ENCODE measurements at regions of chr6 and their contacts with region 1.

Region 1: GRCh38 chr6:21593412-21593926 is at the start of gene SOX4:
- DNase-seq: peak; percentile 91
- ATAC-seq: peak; percentile 84
- H3K4me3 ChIP-seq: peak within 1 kb of the TSS; percentile 66 to 82 (median 71)
- H3K4me3 Mint-ChIP-seq: no peak within 1 kb of the TSS
- H3K27ac ChIP-seq: peak within 1 kb of the TSS; percentile 50 to 62
- H3K27ac Mint-ChIP-seq: peak within 1 kb of the TSS; percentile 96
- H3K4me1 ChIP-seq: peaks cover 23 to 31% of the 10 kb centered on the region in 2 donors
- H3K4me1 Mint-ChIP-seq: peaks cover 23% of the 10 kb centered on the region
- H3K27me3 ChIP-seq: peaks cover 0 to 8% (median 0%) of the 10 kb centered on the region in 4 experiments
- H3K27me3 Mint-ChIP-seq: peaks cover 10% of the 10 kb centered on the region
- CTCF ChIP-seq: no peak
- total RNA-seq, gene SOX4: 5.0 and 5.4 TPM in 2 replicates

Region 2: DNA sequence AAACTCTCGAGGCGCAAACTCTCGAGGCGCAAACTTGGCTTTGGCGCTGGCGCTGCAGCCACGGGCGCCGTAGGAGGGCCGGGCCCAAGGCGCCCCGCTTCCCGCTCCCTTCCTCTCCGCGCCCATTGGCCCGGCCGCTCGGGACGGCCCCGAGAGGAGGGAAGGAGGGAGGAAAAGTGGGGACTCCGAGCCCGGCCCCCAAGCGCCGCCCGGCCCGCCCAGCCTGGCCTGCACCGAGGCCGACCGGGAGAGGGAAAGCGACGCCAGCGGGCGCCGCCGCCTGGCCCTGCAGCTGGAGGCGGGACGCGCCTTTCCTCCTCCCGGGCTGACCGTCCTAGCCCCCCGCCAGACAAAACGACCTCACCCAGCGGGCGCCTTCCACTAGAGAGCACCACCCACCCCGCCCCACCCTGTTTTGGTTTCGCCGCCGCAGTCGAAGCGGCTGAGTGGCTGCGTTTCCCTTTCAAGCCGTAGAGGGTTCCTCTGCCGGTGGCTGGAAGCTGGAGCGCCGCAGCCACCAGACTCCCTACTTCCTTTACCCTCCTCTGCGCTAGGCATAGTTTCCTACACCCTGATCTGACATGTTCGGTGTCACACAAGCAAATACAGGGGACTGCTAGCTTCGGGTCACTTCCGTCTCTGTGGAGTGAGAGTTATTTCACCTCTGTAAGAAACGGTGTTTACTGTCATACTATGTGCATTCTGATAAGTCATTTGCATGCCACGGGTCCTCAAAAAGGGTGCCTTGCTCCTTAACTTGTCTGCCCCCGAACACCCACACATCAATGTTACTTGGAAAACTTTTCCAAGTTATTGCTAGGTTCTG is 1380.9 kb before region 1 on chr6 and contains the start of gene MBOAT1:
- CTCF ChIA-PET with region 1: no interaction called
- POLR2A ChIA-PET with region 1: interaction called, 5 read pairs
- intact Hi-C with region 1: loop called (anchors 2 kb)
- DNase-seq: peak; percentile 80
- ATAC-seq: peak; percentile 73
- H3K4me3 ChIP-seq: peak within 1 kb of the TSS; percentile 64 to 72 (median 68)
- H3K4me3 Mint-ChIP-seq: peak within 1 kb of the TSS; percentile 100
- H3K27ac ChIP-seq: peak within 1 kb of the TSS; percentile 40 to 58
- H3K27ac Mint-ChIP-seq: peak within 1 kb of the TSS; percentile 99
- H3K4me1 ChIP-seq: peaks cover 19 to 21% of the 10 kb centered on the region in 2 donors
- H3K4me1 Mint-ChIP-seq: peaks cover 27% of the 10 kb centered on the region
- H3K27me3 ChIP-seq: peaks cover 0 to 10% (median 1%) of the 10 kb centered on the region in 4 experiments
- H3K27me3 Mint-ChIP-seq: no peaks in the 10 kb centered on the region
- CTCF ChIP-seq: no peak
- total RNA-seq, gene MBOAT1: 7.3 and 8.1 TPM in 2 replicates

Region 3: DNA sequence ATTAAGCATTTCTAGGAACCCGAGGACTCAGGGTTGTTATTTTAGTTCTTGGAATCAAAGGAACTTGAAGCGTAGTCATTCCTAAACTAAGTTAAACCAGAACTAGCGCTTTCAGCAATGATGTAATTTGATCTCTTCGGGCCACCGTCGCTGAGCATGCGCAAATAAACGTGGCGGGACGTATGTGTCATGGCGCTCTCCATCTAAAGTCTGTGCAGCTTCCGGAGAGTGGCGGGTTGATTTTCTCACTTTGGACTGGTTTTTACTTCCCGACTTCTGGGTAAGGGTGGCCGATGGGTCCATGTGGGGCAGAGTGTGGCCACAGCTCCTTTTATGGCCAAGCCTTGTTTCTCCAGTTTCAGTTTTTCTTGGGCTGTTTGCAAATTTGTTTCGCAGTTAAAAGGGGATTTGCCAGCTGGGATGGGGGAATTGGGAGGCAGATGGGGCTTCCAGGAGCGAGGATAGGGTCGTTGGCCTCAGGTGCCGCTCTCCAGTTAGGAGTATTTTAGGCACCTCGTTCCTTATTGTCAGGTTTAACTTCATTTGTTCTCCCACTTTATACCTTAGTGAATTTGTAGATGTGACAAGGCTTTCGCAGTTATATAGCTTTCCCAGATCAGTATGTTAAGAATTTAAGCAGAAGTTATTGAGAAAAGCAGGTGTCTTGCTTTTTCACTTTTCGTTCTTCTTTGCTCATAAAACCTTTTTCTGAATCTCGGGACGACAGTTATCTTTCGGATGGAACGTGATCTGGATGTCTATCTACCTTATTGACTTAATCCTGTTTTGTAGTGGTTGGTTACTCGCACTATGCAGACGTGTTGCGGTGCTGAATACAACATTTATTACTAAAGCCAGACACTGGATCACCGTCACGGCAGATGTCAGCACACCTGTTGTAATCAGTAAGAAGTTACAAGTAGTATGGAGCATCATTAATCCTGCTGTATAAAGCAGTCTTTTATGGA is 1058.9 kb before region 1 on chr6 and contains the start of gene CDKAL1:
- CTCF ChIA-PET with region 1: interaction called, 3 read pairs
- POLR2A ChIA-PET with region 1: no interaction called
- intact Hi-C with region 1: loop called (anchors 1 kb)
- DNase-seq: peak; percentile 92
- ATAC-seq: peak; percentile 93
- H3K4me3 ChIP-seq: peak within 1 kb of the TSS; percentile 86 to 92 (median 89)
- H3K4me3 Mint-ChIP-seq: peak within 1 kb of the TSS; percentile 96
- H3K27ac ChIP-seq: peak within 1 kb of the TSS; percentile 88 to 94
- H3K27ac Mint-ChIP-seq: peak within 1 kb of the TSS; percentile 97
- H3K4me1 ChIP-seq: peaks cover 14 to 16% of the 10 kb centered on the region in 2 donors
- H3K4me1 Mint-ChIP-seq: peaks cover 37% of the 10 kb centered on the region
- H3K27me3 ChIP-seq: no peaks in the 10 kb centered on the region
- H3K27me3 Mint-ChIP-seq: no peaks in the 10 kb centered on the region
- CTCF ChIP-seq: no peak
- total RNA-seq, gene CDKAL1: 33.3 and 35.5 TPM in 2 replicates

Region 4: GRCh38 chr6:20789162-20789561 is 804.3 kb before region 1 on chr6:
- CTCF ChIA-PET with region 1: interaction called, 8 read pairs
- POLR2A ChIA-PET with region 1: no interaction called
- intact Hi-C with region 1: loop called (anchors 5 kb)
- DNase-seq: no peak
- ATAC-seq: no peak
- H3K4me3 ChIP-seq: no peak overlapping the region
- H3K4me3 Mint-ChIP-seq: no peak overlapping the region
- H3K27ac ChIP-seq: no peak overlapping the region
- H3K27ac Mint-ChIP-seq: no peak overlapping the region
- H3K4me1 ChIP-seq: no peaks in the 10 kb centered on the region
- H3K4me1 Mint-ChIP-seq: no peaks in the 10 kb centered on the region
- H3K27me3 ChIP-seq: no peaks in the 10 kb centered on the region
- H3K27me3 Mint-ChIP-seq: no peaks in the 10 kb centered on the region
- CTCF ChIP-seq: no peak

Region 5: GRCh38 chr6:21664314-21665109 is 71.0 kb after region 1 on chr6:
- CTCF ChIA-PET with region 1: no interaction called
- POLR2A ChIA-PET with region 1: no interaction called
- intact Hi-C with region 1: loop called (anchors 5 kb)
- DNase-seq: peak; percentile 25
- ATAC-seq: no peak
- H3K4me3 ChIP-seq: peak overlapping the region in 3 of 5 experiments; percentile 5 to 46 (median 27)
- H3K4me3 Mint-ChIP-seq: peak overlapping the region; percentile 74
- H3K27ac ChIP-seq: no peak overlapping the region
- H3K27ac Mint-ChIP-seq: no peak overlapping the region
- H3K4me1 ChIP-seq: peaks cover 33% of the 10 kb centered on the region in 2 donors
- H3K4me1 Mint-ChIP-seq: peaks cover 36% of the 10 kb centered on the region
- H3K27me3 ChIP-seq: peaks cover 0 to 49% (median 37%) of the 10 kb centered on the region in 4 experiments
- H3K27me3 Mint-ChIP-seq: peaks cover 59% of the 10 kb centered on the region
- CTCF ChIP-seq: no peak

Measured in B cell (primary cell).